H1 (cell line): ENCODE measurements at regions of chr3 and their contacts with region 1.

Region 1: GRCh38 chr3:123286308-123287023 is 84.7 kb downstream of the SEC22A start:
- DNase-seq: peak; percentile 34 to 84
- H3K4me3 ChIP-seq: no peak overlapping the region
- H3K27ac ChIP-seq: no peak overlapping the region; the same call in 1 of the 2 replicates
- H3K4me1 ChIP-seq: no peaks in the 10 kb centered on the region; a peak in 1 of 7 replicates
- H3K27me3 ChIP-seq: no peaks in the 10 kb centered on the region
- CTCF ChIP-seq: peak in 2 of 3 experiments; percentile 95 to 96; a peak in 3 of 4 replicates
- EP300 ChIP-seq: no peak
- POLR2A ChIP-seq: no peak
- RAD21 ChIP-seq: peak; percentile 67 to 80

Region 2: GRCh38 chr3:123297627-123297899 is 11.1 kb after region 1 on chr3:
- CTCF ChIA-PET with region 1: interaction called, 90 read pairs
- POLR2A ChIA-PET with region 1: interaction called, 8 read pairs
- DNase-seq: no peak
- H3K4me3 ChIP-seq: no peak overlapping the region
- H3K27ac ChIP-seq: no peak overlapping the region
- H3K4me1 ChIP-seq: peaks cover 0 to 2% (median 0%) of the 10 kb centered on the region in 4 experiments; a peak in 1 of 7 replicates
- H3K27me3 ChIP-seq: no peaks in the 10 kb centered on the region
- CTCF ChIP-seq: peak in 2 of 3 experiments; percentile 31 to 51; a peak in 3 of 4 replicates
- EP300 ChIP-seq: no peak
- POLR2A ChIP-seq: no peak
- RAD21 ChIP-seq: peak; percentile 66 to 76

Region 3: GRCh38 chr3:123305192-123305591 is 18.7 kb after region 1 on chr3:
- CTCF ChIA-PET with region 1: interaction called, 90 read pairs
- POLR2A ChIA-PET with region 1: interaction called, 4 read pairs
- DNase-seq: no peak
- H3K4me3 ChIP-seq: no peak overlapping the region
- H3K27ac ChIP-seq: no peak overlapping the region
- H3K4me1 ChIP-seq: peaks cover 0 to 2% (median 0%) of the 10 kb centered on the region in 4 experiments; a peak in 2 of 7 replicates
- H3K27me3 ChIP-seq: no peaks in the 10 kb centered on the region
- CTCF ChIP-seq: no peak
- EP300 ChIP-seq: no peak
- POLR2A ChIP-seq: no peak
- RAD21 ChIP-seq: no peak

Region 4: DNA sequence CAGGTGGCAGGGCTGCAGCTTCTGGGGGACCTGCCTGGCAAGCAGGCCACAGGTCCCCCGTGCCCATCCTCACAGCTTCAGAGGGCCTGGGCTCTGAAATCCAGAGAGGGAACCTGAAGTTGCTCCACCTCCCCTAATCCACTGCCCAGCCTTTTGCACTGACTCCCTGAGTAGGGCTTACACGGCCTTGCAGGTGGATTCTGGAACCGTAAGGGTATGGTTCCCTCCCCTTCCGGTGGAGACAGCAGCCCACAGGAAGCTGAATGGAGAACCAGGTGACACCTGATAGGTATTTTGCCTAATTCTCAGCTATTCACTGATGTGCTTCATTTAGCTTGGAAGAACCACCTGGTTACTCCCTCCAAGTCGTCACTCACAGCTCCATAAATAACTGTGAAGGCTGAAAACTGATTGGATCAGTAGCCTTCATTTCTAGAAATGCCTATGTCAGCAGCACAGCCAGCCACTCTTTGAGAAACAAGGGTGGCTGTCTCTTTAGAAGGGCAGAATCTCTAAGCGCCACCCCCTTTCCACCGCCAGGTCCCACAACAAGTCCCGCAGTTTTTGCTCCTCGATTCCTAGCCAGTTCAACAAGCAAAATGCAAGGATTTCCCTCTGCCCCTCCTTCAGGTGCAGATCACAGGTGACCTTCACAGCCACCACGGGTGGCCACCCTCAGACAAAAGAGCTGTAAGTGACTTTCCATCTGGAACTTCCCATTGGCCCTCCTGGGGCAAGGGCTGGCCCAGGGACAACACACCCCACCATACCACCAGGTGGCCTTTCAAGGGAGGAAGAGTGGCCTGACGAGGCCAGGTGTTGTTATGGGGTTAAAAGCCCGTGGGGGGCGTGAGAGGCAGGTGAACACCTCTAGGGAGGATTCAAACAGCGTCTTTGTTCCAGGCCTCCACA is 28.1 kb after region 1 on chr3:
- CTCF ChIA-PET with region 1: interaction called, 6 read pairs
- POLR2A ChIA-PET with region 1: interaction called, 11 read pairs
- DNase-seq: peak; percentile 90 to 93
- H3K4me3 ChIP-seq: peak overlapping the region in 3 of 4 experiments; percentile 20 to 50 (median 33); a peak in 7 of 8 replicates
- H3K27ac ChIP-seq: peak overlapping the region; percentile 78; the same call in 1 of the 2 replicates
- H3K4me1 ChIP-seq: peaks cover 25 to 60% (median 37%) of the 10 kb centered on the region in 4 experiments
- H3K27me3 ChIP-seq: no peaks in the 10 kb centered on the region; a peak in 1 of 7 replicates
- CTCF ChIP-seq: peak in 2 of 3 experiments; percentile 49 to 56; a peak in 3 of 4 replicates
- EP300 ChIP-seq: peak in 1 of 2 experiments; percentile 91; a peak in 1 of 3 replicates
- POLR2A ChIP-seq: peak in 1 of 2 experiments; percentile 40; a peak in 2 of 3 replicates
- RAD21 ChIP-seq: peak; percentile 9 to 24; a peak in 2 of 4 replicates

Region 5: GRCh38 chr3:123365450-123366143 is 79.1 kb after region 1 on chr3:
- CTCF ChIA-PET with region 1: interaction called, 15 read pairs
- POLR2A ChIA-PET with region 1: no interaction called
- DNase-seq: peak in 1 of 2 experiments; percentile 25
- H3K4me3 ChIP-seq: no peak overlapping the region
- H3K27ac ChIP-seq: no peak overlapping the region
- H3K4me1 ChIP-seq: peaks cover 0 to 2% (median 0%) of the 10 kb centered on the region in 4 experiments; a peak in 1 of 7 replicates
- H3K27me3 ChIP-seq: no peaks in the 10 kb centered on the region
- CTCF ChIP-seq: peak; percentile 74 to 96 (median 90)
- EP300 ChIP-seq: no peak
- POLR2A ChIP-seq: no peak
- RAD21 ChIP-seq: peak; percentile 65 to 72

Region 6: DNA sequence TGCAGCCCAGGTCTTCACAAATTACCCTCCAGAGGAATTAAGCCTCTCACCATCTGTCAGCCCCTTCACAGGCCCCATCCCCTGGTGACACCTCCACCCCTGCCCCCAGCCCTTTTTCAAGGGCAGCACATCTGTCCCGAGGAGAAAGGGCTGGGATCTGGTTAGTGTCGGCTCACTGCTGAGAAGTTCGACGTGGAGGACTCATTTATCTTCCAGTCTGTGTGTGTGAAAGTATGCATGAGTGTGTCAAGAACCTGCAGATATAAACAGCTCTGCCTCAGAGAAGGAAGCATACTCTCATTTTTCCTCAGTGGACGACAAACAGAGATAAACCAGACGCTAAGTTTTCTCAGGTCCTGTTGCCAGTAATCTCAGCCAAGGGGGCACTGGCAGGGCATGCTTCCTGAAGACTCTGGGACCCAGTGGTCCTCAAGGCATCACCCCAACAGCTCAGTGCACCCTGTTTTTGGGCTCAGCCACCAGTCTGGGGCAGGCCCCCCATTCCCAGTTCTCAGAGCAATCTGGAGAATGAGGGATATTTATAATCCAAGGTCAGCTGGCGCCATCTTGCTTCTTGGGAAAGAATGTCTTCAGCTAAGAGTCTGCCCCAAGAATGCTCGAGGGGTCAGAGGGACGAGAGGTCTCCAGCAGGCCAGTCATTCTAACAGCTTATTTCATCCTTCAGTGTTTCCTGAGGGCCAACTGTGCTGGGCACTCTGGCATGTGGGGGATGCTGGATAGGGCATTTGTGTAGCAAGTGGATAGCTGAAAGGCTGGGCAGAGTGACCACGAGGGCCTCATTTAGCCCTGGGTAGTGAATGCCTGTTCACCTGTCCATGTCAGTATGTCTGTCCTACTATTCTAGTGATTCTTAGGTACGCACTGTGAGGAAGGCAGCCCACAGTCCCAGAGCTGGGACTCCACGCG is 88.8 kb after region 1 on chr3:
- CTCF ChIA-PET with region 1: interaction called, 10 read pairs
- POLR2A ChIA-PET with region 1: no interaction called
- DNase-seq: no peak
- H3K4me3 ChIP-seq: no peak overlapping the region
- H3K27ac ChIP-seq: no peak overlapping the region
- H3K4me1 ChIP-seq: peaks cover 0 to 4% (median 0%) of the 10 kb centered on the region in 4 experiments; a peak in 1 of 7 replicates
- H3K27me3 ChIP-seq: peaks cover 0 to 2% (median 0%) of the 10 kb centered on the region in 4 experiments; a peak in 1 of 7 replicates
- CTCF ChIP-seq: peak; percentile 29 to 67 (median 54)
- EP300 ChIP-seq: no peak
- POLR2A ChIP-seq: no peak
- RAD21 ChIP-seq: peak; percentile 77 to 84